ENCODE measurements at regions of chr11 and their contacts with region 1.

Region 1: DNA sequence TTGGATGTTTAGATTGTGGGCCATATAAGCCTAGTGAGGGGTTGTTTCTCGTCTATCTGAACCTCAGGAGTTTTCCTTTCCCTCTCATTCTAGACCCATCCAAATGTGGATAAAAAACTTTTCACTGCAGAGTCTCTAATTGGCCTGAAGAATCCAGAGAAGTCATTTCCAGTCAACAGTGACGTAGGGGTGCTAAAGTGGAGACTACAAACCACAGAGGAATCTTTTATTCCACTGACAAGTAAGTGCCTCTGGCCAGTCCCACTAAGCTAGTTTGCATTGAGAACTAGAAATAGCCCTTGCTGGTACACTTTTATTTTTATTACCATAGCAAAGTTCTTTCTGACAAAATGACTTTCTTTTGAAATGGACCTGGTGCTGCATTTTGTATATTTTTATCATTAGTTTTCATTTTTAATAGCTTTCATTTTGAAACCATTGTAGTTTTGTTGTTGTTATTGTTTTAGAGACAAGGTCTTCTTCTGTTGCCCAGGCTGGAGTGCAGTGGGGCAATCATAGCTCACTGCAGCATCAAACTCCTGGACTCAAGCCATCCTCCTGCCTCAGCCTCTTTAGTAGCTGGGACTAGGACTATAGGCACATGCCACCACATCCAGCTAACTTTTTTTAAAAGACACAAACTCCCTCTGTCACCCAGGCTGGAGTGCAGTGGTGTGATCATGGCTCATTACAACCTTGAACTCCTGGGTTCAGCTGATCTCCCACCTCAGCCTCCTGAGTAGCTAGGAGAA is 14.6 kb upstream of the PHLDB1 start:
- DNase-seq: no peak
- H3K4me3 Mint-ChIP-seq: no peak overlapping the region
- H3K27ac Mint-ChIP-seq: no peak overlapping the region
- H3K4me1 Mint-ChIP-seq: peaks cover 10% of the 10 kb centered on the region
- H3K27me3 Mint-ChIP-seq: no peaks in the 10 kb centered on the region

Region 2: GRCh38 chr11:118552341-118552740 is 40.5 kb before region 1 on chr11:
- intact Hi-C with region 1: no loop called
- DNase-seq: no peak
- H3K4me3 Mint-ChIP-seq: no peak overlapping the region
- H3K27ac Mint-ChIP-seq: no peak overlapping the region
- H3K4me1 Mint-ChIP-seq: no peaks in the 10 kb centered on the region
- H3K27me3 Mint-ChIP-seq: no peaks in the 10 kb centered on the region

Region 3: GRCh38 chr11:118610804-118611795 is 18.3 kb after region 1 on chr11:
- intact Hi-C with region 1: loop called (anchors 1 kb)
- DNase-seq: peak; percentile 96
- H3K4me3 Mint-ChIP-seq: peak overlapping the region; percentile 76
- H3K27ac Mint-ChIP-seq: peak overlapping the region; percentile 17
- H3K4me1 Mint-ChIP-seq: peaks cover 25% of the 10 kb centered on the region
- H3K27me3 Mint-ChIP-seq: peaks cover 36% of the 10 kb centered on the region

Region 4: DNA sequence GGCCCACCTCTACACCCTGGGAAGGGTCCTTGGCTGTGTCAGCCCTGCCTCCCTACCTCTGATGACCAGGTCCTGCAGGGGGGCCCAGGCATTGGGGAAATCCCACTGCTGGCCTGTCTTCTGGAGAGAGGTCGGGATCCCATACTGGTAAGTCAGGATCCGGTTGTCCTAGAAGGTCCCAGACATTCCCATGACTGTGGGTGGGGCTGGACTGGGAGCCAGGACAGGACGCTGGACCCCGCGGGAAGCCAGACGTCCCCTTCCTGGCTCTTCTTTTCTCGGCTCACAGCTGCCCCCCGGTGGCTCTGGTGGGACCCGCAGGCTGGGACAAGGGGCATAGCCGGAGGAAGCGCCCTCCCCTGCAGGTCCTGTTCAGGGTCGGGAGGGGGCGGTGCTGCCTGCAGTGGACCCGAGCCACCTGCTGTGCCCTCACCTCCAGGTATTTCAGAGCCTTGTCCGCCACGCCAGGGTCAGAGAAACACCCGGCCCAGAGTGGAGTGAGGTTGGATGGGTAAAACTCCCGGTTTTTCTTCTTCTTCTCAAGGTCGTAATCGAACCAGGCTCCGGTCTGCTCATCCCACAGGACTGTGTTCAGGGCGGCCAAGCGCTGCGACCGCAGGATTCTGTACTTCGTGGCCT is 66.6 kb after region 1 on chr11:
- intact Hi-C with region 1: loop called (anchors 1 kb)
- DNase-seq: peak; percentile 96
- H3K4me3 Mint-ChIP-seq: no peak overlapping the region
- H3K27ac Mint-ChIP-seq: no peak overlapping the region
- H3K4me1 Mint-ChIP-seq: peaks cover 3% of the 10 kb centered on the region
- H3K27me3 Mint-ChIP-seq: no peaks in the 10 kb centered on the region

Measured in activated CD4-positive, alpha-beta T cell treated with anti-CD3 and anti-CD28 coated beads, Interleukin-2, amount 10 ng/mL, durations not matched to agents 24 days and 14 days (primary cell).